ENCODE measurements at regions of chr7 and their contacts with region 1.

Region 1: DNA sequence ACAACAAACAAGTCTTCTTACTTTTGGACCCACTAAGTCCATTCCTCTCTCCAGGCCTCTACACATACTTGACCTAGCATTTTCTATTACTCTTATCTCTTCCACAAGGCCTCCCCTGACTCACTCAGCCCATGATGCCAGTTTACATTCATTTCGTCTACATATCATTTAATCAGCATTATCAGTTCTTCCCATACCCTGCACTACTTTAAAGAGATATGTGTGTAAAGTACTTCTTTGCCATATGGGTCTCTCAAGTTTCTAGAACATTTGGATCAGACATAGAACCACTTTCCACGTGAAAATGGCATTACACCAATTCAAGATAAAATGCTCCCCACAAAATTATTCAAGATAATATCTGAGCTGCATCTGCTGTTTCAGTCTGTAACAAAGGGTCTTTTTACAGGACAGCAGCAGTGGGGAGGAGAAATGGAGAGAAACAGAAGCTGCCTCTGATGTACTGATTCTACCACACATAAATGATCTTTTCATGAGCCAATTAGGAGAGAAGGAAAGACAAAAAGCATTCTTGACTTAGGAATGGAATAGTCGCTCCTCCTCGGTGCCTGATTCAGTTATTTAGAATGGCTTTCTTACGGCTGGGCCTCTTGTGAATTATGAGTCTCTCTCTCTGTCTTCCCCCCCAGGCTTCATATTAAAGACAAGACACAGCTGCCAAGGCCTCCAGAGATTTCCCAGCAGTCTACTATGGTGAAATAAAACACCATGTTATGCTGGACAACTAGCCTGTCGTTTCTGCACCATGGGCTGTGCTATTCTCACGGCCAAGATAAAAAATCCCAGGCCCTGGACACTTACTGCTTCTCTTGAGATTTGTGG is 46.9 kb upstream of the SEPTIN7 start:
- DNase-seq: peak in 1 of 10 donors; percentile 23

Region 2: DNA sequence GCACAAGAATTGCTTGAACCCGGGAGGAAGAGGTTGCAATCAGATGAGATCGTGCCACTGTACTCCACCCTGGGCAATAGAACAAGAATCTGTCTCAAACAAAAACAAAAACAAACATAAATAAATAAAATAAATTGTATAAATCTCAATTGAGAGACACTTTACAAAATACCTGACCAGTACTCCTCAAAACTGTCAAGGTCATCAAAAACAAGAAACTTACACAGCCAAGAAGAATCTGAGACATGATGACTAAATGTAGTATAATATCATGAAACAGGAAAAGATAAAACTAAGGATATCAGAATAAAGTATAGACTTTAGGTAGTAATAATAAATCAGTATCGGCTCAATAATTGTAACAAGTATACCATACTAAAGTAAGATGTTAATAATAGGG is 20.0 kb after region 1 on chr7:
- intact Hi-C with region 1: loop called (anchors 2 kb)
- DNase-seq: no peak